ENCODE measurements at regions of chr15 and their contacts with region 1.

Region 1: GRCh38 chr15:28125673-28126651 is 26.8 kb upstream of the OCA2 start:
- DNase-seq: no peak
- ATAC-seq: 0 out of 2 replicates have a peak, but pooled peaks have one; percentile 38
- H3K4me3 Mint-ChIP-seq: no peak overlapping the region
- H3K27ac Mint-ChIP-seq: no peak overlapping the region
- H3K4me1 Mint-ChIP-seq: no peaks in the 10 kb centered on the region
- H3K27me3 Mint-ChIP-seq: no peaks in the 10 kb centered on the region
- CTCF ChIP-seq: peak; percentile 45; the same call in 1 of the 2 replicates

Region 2: DNA sequence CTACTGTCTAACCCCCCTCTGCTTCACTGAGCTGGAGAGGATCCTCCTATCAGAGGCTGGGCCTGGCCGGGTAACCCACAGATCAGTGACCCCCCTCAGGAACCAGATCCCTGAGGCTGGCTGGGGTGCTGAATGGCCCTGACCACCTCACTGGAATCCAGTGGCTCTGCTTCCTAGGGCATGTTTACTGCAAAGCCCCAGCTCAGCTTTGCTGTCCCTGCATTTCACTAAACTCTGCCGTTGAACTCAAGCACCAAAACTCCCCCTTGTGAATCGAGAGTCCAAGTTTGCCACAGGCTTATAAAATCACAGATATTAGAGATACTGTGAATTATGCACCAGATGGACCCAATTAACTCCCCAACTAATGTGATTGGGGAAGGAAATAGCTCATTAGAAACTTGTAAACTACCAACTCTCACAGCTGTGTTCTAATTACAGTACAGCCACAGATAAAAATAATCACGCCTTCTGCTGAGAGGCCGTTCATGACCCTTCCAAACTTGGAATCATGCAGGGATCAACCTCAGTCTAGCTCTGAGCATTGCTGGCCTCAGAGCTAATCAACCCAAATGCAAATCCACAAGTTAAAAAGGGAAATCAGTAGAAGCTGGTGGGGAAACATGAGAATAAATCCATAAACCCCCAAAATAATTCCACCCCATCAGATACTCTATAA is 73.9 kb before region 1 on chr15:
- CTCF ChIA-PET with region 1: no interaction called
- POLR2A ChIA-PET with region 1: no interaction called
- DNase-seq: no peak
- ATAC-seq: no peak
- H3K4me3 Mint-ChIP-seq: no peak overlapping the region
- H3K27ac Mint-ChIP-seq: no peak overlapping the region
- H3K4me1 Mint-ChIP-seq: no peaks in the 10 kb centered on the region
- H3K27me3 Mint-ChIP-seq: no peaks in the 10 kb centered on the region
- CTCF ChIP-seq: no peak

Region 3: GRCh38 chr15:28068930-28069329 is 57.0 kb before region 1 on chr15:
- CTCF ChIA-PET with region 1: no interaction called
- POLR2A ChIA-PET with region 1: no interaction called
- DNase-seq: no peak
- ATAC-seq: no peak
- H3K4me3 Mint-ChIP-seq: no peak overlapping the region
- H3K27ac Mint-ChIP-seq: no peak overlapping the region
- H3K4me1 Mint-ChIP-seq: peaks cover 9% of the 10 kb centered on the region; the same call in 1 of the 2 replicates
- H3K27me3 Mint-ChIP-seq: peaks cover 9% of the 10 kb centered on the region; the same call in 1 of the 2 replicates
- CTCF ChIP-seq: no peak

Region 4: GRCh38 chr15:28098766-28099554 is 27.0 kb before region 1 on chr15 and contains the start of gene OCA2:
- CTCF ChIA-PET with region 1: interaction called, 13 read pairs
- POLR2A ChIA-PET with region 1: no interaction called
- DNase-seq: peak; percentile 92
- ATAC-seq: peak; percentile 37
- H3K4me3 Mint-ChIP-seq: peak within 1 kb of the TSS; percentile 73
- H3K27ac Mint-ChIP-seq: no peak within 1 kb of the TSS
- H3K4me1 Mint-ChIP-seq: peaks cover 23% of the 10 kb centered on the region
- H3K27me3 Mint-ChIP-seq: peaks cover 91% of the 10 kb centered on the region
- CTCF ChIP-seq: no peak
- total RNA-seq, gene OCA2: 0.27 to 0.39 TPM (median 0.27 TPM) in 3 replicates

Region 5: DNA sequence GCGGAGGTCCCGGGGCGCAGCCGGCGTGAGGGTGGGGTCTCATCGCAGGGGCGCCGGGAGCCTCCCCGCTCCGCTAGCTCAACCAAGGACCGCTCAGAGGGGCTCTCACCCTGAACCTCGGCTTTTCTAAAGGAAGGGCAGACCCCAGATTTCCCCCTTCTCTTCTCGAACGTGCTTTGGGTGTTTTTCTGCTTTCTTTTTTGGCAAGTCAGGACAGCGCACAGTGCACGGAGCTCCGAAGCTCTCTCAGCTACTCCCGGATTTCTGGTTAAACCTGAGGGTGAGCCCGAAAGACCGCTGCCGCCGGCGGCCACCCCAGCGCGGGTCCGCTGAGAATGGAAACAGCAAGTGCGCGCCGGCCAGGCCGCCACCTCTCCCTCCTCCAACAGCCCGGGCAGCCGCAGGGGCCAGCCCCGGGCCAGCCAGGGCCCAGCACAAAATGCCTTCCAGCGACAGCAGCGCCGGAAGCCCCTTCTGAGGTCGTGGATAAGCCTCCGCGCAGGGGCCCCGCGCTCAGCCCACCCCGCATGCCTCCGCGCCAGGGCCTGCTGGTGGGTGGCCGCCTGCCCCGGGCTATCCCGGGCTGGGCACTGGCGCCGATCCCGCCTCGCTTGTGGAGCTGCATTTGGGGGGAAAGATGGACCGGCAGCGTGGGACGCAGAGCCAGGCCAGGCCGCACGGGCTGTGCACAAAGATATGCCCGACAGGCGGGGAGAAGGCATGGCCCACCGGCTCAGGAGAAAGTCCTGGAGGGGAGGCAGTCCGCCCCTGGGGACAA is 18.7 kb before region 1 on chr15:
- CTCF ChIA-PET with region 1: interaction called, 12 read pairs
- POLR2A ChIA-PET with region 1: no interaction called
- DNase-seq: peak; percentile 55
- ATAC-seq: peak; percentile 69
- H3K4me3 Mint-ChIP-seq: peak overlapping the region; percentile 86
- H3K27ac Mint-ChIP-seq: no peak overlapping the region
- H3K4me1 Mint-ChIP-seq: peaks cover 10% of the 10 kb centered on the region
- H3K27me3 Mint-ChIP-seq: peaks cover 55% of the 10 kb centered on the region
- CTCF ChIP-seq: no peak

Region 6: DNA sequence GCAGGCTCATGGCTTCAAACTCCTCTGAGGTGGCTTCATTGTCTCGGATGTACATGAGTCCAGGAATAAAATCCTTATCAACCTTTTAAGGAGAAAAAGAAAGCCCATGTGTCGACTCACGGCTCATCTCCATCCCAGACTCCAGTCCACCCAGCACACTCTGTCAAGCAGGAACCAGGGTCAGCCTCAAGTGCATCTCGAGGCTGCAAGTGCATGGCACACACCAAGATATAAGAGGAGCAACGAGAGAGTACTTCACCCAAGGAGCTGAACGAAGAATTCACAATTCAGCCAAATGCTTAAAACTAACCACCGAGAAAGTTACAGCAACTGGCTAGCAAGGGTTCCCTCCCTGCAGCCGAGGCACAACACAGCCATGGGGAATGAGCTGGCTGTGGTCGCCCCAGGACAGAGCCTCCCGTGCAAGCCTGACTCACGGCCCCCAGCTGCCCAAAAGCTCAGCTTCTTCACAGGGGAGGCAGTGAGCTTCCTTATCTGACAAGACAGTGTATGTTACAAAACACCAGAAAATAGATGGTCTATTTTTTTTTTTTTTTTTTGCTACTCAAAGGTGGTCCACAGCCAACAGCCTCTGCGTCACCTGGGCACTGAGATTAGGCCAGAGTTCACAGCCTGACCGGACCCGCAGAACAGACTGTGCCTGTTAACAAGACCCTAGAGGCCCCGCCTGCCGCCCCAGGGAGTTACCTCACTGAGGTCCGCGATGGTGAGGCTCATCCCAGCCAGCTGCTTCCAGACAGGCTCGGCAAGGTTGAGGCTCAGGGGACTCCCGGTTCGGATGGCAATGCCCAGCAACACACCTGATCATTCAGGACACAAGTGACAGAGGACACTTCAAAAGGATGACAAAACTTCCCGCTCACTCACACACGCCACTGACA is 11.0 kb before region 1 on chr15:
- CTCF ChIA-PET with region 1: interaction called, 14 read pairs
- POLR2A ChIA-PET with region 1: no interaction called
- DNase-seq: no peak
- ATAC-seq: no peak; the same call in 1 of the 2 replicates
- H3K4me3 Mint-ChIP-seq: no peak overlapping the region
- H3K27ac Mint-ChIP-seq: no peak overlapping the region
- H3K4me1 Mint-ChIP-seq: no peaks in the 10 kb centered on the region
- H3K27me3 Mint-ChIP-seq: no peaks in the 10 kb centered on the region
- CTCF ChIP-seq: no peak

Measured in WTC11 (cell line).